Ovary (tissue), 10 donors: ENCODE measurements at regions of chr12 and their contacts with region 1.

Region 1: GRCh38 chr12:55738123-55739024 is 4.5 kb upstream of the GDF11 start:
- DNase-seq: peak; percentile 87 to 91 (median 87)
- H3K4me3 ChIP-seq: peak overlapping the region; percentile 51
- H3K27ac ChIP-seq: peak overlapping the region in 1 of 2 donors; percentile 75
- H3K4me1 ChIP-seq: no peaks in the 10 kb centered on the region
- H3K27me3 ChIP-seq: no peaks in the 10 kb centered on the region
- CTCF ChIP-seq: peak; percentile 75 to 94 (median 93)
- EP300 ChIP-seq: no peak
- POLR2A ChIP-seq: peak; percentile 12

Region 2: GRCh38 chr12:55797068-55797467 is 58.7 kb after region 1 on chr12:
- intact Hi-C with region 1: loop called in 2 of 4 experiments (anchors 10 kb)
- DNase-seq: no peak
- H3K4me3 ChIP-seq: no peak overlapping the region
- H3K27ac ChIP-seq: no peak overlapping the region
- H3K4me1 ChIP-seq: no peaks in the 10 kb centered on the region
- H3K27me3 ChIP-seq: no peaks in the 10 kb centered on the region
- CTCF ChIP-seq: no peak
- EP300 ChIP-seq: no peak
- POLR2A ChIP-seq: no peak

Region 3: GRCh38 chr12:55806982-55807381 is 68.6 kb after region 1 on chr12:
- intact Hi-C with region 1: loop called in 1 of 4 experiments (anchors 10 kb)
- DNase-seq: no peak
- H3K4me3 ChIP-seq: no peak overlapping the region
- H3K27ac ChIP-seq: no peak overlapping the region
- H3K4me1 ChIP-seq: peaks cover 1% of the 10 kb centered on the region
- H3K27me3 ChIP-seq: no peaks in the 10 kb centered on the region
- CTCF ChIP-seq: no peak
- EP300 ChIP-seq: no peak
- POLR2A ChIP-seq: no peak

Region 4: GRCh38 chr12:55926738-55927587 is 188.6 kb after region 1 on chr12:
- intact Hi-C with region 1: loop called in 3 of 4 experiments (anchors 5 kb)
- DNase-seq: peak; percentile 84 to 93 (median 93)
- H3K4me3 ChIP-seq: peak overlapping the region; percentile 87
- H3K27ac ChIP-seq: peak overlapping the region; percentile 80 to 94
- H3K4me1 ChIP-seq: peaks cover 16% of the 10 kb centered on the region
- H3K27me3 ChIP-seq: no peaks in the 10 kb centered on the region
- CTCF ChIP-seq: peak; percentile 63 to 71 (median 68)
- EP300 ChIP-seq: no peak
- POLR2A ChIP-seq: peak; percentile 79

Region 5: DNA sequence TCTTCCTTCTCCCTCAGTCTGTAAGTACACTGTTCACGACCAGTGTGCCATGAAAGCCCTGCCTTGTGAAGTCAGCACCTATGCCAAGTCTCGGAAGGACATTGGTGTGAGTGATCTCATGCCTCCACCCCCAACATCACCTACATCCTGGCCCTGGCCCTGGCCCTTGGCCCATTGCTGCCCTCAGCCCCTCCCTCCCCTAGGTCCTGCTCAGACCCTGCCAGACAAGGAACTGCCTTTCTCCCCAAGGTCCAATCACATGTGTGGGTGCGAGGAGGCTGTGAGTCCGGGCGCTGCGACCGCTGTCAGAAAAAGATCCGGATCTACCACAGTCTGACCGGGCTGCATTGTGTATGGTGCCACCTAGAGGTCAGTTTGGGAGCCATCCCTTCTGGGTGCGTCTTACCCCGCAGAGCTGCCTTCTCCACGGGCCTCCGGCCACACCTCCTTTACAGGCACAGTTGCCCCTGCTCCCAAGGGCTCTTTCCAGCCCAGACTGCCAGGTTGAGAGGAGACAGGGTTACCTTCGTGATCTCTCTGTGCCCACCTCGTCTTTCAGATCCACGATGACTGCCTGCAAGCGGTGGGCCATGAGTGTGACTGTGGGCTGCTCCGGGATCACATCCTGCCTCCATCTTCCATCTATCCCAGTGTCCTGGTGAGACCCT is 201.8 kb after region 1 on chr12:
- intact Hi-C with region 1: loop called (anchors 2 to 5 kb)
- DNase-seq: peak; percentile 79 to 88 (median 84)
- H3K4me3 ChIP-seq: no peak overlapping the region
- H3K27ac ChIP-seq: no peak overlapping the region
- H3K4me1 ChIP-seq: peaks cover 3% of the 10 kb centered on the region
- H3K27me3 ChIP-seq: no peaks in the 10 kb centered on the region
- CTCF ChIP-seq: peak; percentile 80 to 89 (median 87)
- EP300 ChIP-seq: no peak
- POLR2A ChIP-seq: peak; percentile 25

Region 6: DNA sequence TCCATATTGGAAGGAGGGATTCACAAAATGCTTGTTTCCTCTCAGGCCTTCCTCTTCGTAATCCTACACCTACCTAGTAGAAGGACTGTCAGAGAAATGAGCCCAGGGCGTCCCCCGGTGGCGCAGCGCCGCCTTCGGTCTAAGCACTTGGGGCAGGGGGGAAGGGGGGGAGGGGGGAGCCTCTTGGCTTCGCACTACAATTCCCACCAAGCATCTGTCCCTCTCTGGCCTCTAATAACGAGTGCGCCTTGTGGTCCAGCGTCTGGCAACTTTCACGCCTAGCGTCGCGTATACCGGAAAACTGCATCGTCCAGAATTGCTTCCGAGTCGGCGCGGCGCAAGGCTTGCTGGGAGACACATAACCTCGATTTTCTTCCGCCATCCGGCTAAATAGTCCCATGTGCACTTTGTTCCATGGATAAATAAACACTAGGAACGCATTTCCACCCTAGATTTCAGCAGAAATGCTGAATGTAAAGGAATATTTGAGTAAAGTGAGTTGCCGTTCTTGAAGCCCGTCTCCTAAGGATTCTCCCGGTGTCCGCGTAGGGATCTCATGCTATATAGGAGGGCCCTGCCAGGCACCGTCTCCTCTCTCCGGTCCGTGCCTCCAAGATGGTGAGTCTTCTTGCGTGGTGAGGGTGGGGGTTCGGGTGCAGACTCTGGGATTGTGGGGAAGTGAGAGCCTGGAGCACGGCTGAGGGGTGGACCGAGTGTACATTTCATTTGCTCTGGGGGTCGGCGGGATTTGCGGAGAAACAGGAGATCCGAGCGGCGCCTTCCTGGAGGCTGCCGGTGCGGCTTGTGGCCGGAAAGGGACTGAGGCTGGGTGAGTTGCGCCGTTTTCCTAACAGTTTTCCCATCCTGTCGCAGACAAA is 303.4 kb after region 1 on chr12 and contains the start of gene RPS26:
- intact Hi-C with region 1: loop called in 1 of 4 experiments (anchors 10 kb)
- DNase-seq: peak; percentile 96 to 98 (median 97)
- H3K4me3 ChIP-seq: peak within 1 kb of the TSS; percentile 85
- H3K27ac ChIP-seq: peak within 1 kb of the TSS; percentile 84 to 94
- H3K4me1 ChIP-seq: no peaks in the 10 kb centered on the region
- H3K27me3 ChIP-seq: no peaks in the 10 kb centered on the region
- CTCF ChIP-seq: peak in 2 of 3 donors; percentile 35 to 36
- EP300 ChIP-seq: peak; percentile 54
- POLR2A ChIP-seq: peak; percentile 94
- total RNA-seq, gene RPS26: 16.2 to 2,562 (median 59.7) TPM

Region 7: DNA sequence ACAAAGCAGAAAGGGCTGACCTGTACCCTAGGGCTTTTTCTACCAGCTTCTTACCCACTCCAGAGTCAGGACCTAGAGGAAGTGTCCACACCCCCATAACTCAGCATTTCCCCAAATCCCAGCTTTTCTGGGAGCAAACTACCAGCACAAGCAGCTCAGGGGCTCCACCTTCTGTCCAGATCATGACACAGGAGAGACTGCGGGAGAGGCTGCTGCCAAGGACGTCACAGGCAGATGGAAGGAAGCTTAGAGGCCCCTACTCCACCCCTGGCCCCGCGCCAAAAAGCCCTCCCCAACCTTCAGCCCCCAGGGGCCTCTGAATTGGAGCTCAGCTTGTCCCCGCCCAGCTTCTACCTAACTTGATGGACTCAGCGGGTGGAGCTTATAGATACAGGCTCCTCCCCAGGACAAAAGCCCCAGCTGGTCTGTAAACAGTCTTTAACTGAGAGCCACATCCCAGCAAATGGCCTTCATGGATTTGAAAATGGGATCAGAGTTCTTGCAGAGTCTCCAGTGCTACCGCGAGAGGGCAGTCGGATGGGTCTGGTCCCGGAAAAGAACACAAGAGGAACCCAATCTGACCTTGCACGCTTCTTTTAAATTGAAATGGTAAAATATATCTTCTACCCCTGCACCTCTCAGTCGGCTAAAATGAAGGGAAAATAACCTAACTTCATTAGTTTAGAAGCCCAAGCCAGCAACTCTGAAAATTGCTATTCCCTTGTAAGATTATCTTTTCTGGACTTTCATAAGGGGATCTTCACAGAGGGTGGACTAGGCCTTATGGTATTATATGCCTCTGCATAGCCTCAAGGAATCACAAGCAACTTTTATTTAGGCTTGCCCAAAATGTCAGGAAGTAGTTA is 898.5 kb after region 1 on chr12:
- intact Hi-C with region 1: loop called in 1 of 4 experiments (anchors 10 kb)
- DNase-seq: peak; percentile 100
- H3K4me3 ChIP-seq: peak overlapping the region; percentile 64
- H3K27ac ChIP-seq: peak overlapping the region; percentile 90
- H3K4me1 ChIP-seq: peaks cover 14% of the 10 kb centered on the region
- H3K27me3 ChIP-seq: no peaks in the 10 kb centered on the region
- CTCF ChIP-seq: peak; percentile 59 to 68 (median 61)
- EP300 ChIP-seq: peak; percentile 10
- POLR2A ChIP-seq: no peak